ENCODE measurements at regions of chr3 and their contacts with region 1.

Region 1: GRCh38 chr3:151412989-151413388 is 28.4 kb upstream of the P2RY12 start:
- DNase-seq: peak in 1 of 2 experiments; percentile 60
- H3K4me3 ChIP-seq: no peak overlapping the region
- H3K27ac ChIP-seq: no peak overlapping the region
- H3K4me1 ChIP-seq: no peaks in the 10 kb centered on the region
- H3K27me3 ChIP-seq: no peaks in the 10 kb centered on the region
- CTCF ChIP-seq: peak; percentile 61 to 68 (median 61)
- EP300 ChIP-seq: no peak
- POLR2A ChIP-seq: no peak
- RAD21 ChIP-seq: peak; percentile 62 to 69

Region 2: DNA sequence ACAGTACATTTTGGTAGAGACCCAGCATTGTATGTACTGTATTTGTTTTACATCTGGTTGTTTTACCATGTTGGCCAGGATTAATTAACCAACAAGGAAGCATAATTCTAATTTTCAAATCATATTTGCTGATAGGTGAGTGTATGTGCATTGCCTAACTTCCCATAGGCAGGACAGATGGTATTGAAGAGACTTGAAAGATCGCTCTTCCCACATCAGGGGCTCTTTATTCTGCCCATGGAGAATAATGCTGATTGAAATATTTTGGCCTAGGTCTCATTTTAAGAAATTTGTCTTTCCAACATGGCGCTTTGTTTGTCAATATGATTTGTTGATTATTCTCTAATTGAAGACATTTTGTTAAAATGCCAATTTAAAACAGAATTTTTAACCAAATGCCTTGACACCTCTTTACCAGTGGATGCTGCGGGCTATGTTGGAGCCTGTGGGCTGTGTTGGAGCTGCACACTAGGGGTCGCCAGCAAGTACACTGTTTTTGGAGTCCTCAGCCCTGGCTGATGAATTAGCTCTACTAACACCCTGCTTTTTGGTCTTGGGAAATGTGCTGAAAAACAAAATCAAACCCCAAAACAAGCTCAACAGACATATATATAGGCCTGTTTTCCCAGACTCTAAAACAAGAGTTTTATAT is 33.8 kb before region 1 on chr3:
- CTCF ChIA-PET with region 1: interaction called, 19 read pairs
- POLR2A ChIA-PET with region 1: no interaction called
- DNase-seq: peak in 1 of 2 experiments; percentile 63
- H3K4me3 ChIP-seq: no peak overlapping the region
- H3K27ac ChIP-seq: no peak overlapping the region
- H3K4me1 ChIP-seq: no peaks in the 10 kb centered on the region
- H3K27me3 ChIP-seq: no peaks in the 10 kb centered on the region
- CTCF ChIP-seq: peak; percentile 72 to 86 (median 81)
- EP300 ChIP-seq: no peak
- POLR2A ChIP-seq: no peak
- RAD21 ChIP-seq: peak; percentile 61 to 69

Region 3: GRCh38 chr3:151387842-151388241 is 25.1 kb before region 1 on chr3:
- CTCF ChIA-PET with region 1: interaction called, 14 read pairs
- POLR2A ChIA-PET with region 1: no interaction called
- DNase-seq: no peak
- H3K4me3 ChIP-seq: no peak overlapping the region
- H3K27ac ChIP-seq: no peak overlapping the region
- H3K4me1 ChIP-seq: peaks cover 0 to 3% (median 0%) of the 10 kb centered on the region in 4 experiments; a peak in 1 of 7 replicates
- H3K27me3 ChIP-seq: no peaks in the 10 kb centered on the region
- CTCF ChIP-seq: no peak
- EP300 ChIP-seq: no peak
- POLR2A ChIP-seq: no peak
- RAD21 ChIP-seq: no peak

Region 4: GRCh38 chr3:151398895-151399294 is 14.1 kb before region 1 on chr3:
- CTCF ChIA-PET with region 1: interaction called, 20 read pairs
- POLR2A ChIA-PET with region 1: no interaction called
- DNase-seq: no peak
- H3K4me3 ChIP-seq: no peak overlapping the region
- H3K27ac ChIP-seq: no peak overlapping the region
- H3K4me1 ChIP-seq: peaks cover 4 to 7% (median 6%) of the 10 kb centered on the region in 4 experiments
- H3K27me3 ChIP-seq: no peaks in the 10 kb centered on the region
- CTCF ChIP-seq: no peak
- EP300 ChIP-seq: no peak
- POLR2A ChIP-seq: no peak
- RAD21 ChIP-seq: no peak

Region 5: GRCh38 chr3:151675858-151676615 is 263.0 kb after region 1 on chr3:
- CTCF ChIA-PET with region 1: no interaction called
- POLR2A ChIA-PET with region 1: no interaction called
- DNase-seq: no peak
- H3K4me3 ChIP-seq: no peak overlapping the region
- H3K27ac ChIP-seq: no peak overlapping the region
- H3K4me1 ChIP-seq: no peaks in the 10 kb centered on the region
- H3K27me3 ChIP-seq: no peaks in the 10 kb centered on the region
- CTCF ChIP-seq: no peak
- EP300 ChIP-seq: no peak
- POLR2A ChIP-seq: no peak
- RAD21 ChIP-seq: no peak